Psoas muscle (tissue), 8 donors: ENCODE measurements at regions of chr15 and their contacts with region 1.

Region 1: DNA sequence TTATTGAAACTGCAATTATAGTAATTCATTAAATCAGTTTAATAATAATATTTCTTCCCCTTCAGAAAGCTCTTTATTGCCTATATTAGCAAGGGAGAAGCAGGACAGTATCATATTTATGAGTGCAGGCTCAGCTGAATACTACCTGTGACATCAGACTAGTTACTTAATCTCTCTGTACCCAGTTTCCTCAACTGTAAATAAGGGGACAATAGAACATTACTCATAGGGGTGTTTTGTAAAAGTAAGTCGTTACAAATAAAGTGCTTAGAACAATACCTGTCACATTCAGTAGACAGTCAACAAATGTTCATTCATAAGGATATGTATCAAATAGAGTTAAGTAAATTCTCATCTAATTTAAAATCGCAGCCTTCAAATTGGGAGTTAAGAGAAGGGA is 12.1 kb upstream of the VPS39 start:
- DNase-seq: no peak
- ATAC-seq: no peak
- H3K4me3 ChIP-seq: no peak overlapping the region
- H3K27ac ChIP-seq: no peak overlapping the region
- H3K4me1 ChIP-seq: no peaks in the 10 kb centered on the region
- H3K27me3 ChIP-seq: no peaks in the 10 kb centered on the region
- CTCF ChIP-seq: no peak

Region 2: DNA sequence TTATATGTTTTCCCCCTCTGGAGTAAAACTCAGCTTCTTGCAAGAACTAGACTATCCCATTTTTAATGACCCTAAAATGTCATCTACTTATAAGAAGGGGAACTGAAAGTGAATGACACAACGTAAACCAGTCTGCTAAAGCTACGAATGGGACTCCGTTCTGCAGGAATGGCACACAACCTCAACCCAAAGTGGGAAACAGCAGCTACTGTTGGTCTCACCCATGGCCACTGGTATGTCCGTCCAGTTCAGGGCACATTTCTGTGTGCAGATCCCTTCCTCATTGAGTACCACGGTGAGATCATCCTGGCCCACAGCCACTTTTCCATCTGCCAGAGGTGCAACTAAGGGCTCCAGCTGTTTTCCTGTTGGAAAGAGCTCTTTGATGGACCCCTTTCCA is 35.9 kb before region 1 on chr15:
- intact Hi-C with region 1: no loop called
- DNase-seq: no peak
- ATAC-seq: no peak
- H3K4me3 ChIP-seq: no peak overlapping the region
- H3K27ac ChIP-seq: no peak overlapping the region
- H3K4me1 ChIP-seq: no peaks in the 10 kb centered on the region
- H3K27me3 ChIP-seq: no peaks in the 10 kb centered on the region
- CTCF ChIP-seq: no peak

Region 3: GRCh38 chr15:42264795-42265194 is 44.6 kb after region 1 on chr15:
- intact Hi-C with region 1: loop called in 1 of 2 experiments (anchors 5 kb)
- DNase-seq: no peak
- ATAC-seq: no peak
- H3K4me3 ChIP-seq: no peak overlapping the region
- H3K27ac ChIP-seq: no peak overlapping the region
- H3K4me1 ChIP-seq: peaks cover 3% of the 10 kb centered on the region
- H3K27me3 ChIP-seq: no peaks in the 10 kb centered on the region
- CTCF ChIP-seq: no peak